ENCODE measurements at regions of chr7 and their contacts with region 1.

Region 1: DNA sequence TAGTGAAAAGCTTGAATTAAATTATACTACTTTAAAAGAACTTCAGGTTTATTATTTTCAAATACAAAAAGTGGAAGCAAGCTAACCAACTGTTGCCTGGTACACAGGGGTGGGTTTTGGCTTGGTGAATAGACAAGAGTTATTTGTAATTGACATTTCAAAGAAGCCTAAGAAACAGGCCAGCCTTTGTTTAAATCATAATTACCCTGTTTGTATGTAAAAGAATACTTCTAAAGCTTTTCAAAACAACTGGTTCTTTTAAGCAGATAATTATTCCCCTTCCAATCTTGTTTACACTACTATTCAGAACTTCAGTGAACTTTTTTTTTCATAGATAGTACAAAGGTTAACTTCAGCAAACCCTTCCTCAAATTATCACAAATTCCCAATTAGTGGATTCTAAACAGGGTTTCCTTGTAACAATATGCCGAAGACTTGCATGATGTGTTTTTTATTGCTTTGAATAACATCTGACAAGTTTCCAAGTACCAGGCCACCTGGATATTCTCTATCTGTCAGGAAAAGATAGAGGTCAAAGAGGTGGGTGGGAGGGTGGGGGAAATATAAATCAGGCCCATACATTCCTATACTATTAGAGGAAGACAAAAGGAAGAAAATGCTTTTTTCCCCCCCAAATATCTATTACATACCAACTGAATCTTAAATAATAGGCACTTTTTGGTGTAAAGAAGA is 20.4 kb downstream of the SSMEM1 start:
- DNase-seq: no peak
- CTCF ChIP-seq: no peak

Region 2: DNA sequence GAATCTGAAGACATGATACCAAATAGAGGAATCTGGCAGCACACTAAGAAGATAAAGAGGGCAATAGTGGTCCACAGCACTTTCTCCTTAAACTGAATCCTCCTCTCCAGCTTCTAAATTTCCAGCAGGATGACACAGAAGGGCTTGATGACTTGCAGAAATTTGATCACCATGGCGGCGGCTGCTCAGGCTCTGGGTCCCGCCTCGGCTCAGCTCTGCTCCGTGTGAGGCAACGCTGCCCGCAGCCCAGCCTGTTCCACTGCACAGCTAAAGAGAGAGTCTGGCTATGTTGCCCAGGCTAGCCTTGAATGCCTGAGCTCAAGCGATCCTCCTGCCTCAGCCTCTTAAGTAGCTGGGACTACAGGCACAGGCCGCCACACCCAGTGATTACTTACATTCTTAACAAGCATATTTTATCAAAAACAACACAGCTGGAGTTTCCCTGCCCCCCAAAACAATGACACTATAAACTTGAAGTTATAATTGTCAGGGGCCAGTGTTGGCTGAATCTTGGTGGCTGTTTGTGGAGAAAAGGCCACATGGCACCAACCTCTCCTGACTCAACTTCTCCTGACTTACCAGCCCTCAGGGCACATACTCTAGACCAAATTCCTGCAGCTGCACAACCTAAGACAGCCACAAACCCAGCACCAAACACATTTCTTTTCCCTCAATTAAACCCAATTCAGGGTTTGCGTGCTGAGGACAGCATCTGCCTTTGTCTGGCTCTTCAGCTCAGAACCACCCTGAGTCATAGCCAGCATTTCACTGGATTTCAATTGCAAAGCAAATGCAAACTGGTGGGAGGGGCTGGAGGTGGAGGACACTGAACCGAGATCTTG is 1161.5 kb before region 1 on chr7:
- CTCF ChIA-PET with region 1: no interaction called
- POLR2A ChIA-PET with region 1: no interaction called
- DNase-seq: no peak
- CTCF ChIP-seq: no peak

Region 3: GRCh38 chr7:130182990-130183389 is 45.0 kb before region 1 on chr7:
- CTCF ChIA-PET with region 1: no interaction called
- POLR2A ChIA-PET with region 1: no interaction called
- DNase-seq: peak; percentile 39
- CTCF ChIP-seq: no peak

Region 4: GRCh38 chr7:130242198-130243014 is 14.4 kb after region 1 on chr7:
- CTCF ChIA-PET with region 1: interaction called, 12 read pairs
- POLR2A ChIA-PET with region 1: no interaction called
- DNase-seq: peak; percentile 48
- CTCF ChIP-seq: peak; percentile 78

Measured in GM10248 (cell line).